ENCODE measurements at regions of chr6 and their contacts with region 1.

Region 1: DNA sequence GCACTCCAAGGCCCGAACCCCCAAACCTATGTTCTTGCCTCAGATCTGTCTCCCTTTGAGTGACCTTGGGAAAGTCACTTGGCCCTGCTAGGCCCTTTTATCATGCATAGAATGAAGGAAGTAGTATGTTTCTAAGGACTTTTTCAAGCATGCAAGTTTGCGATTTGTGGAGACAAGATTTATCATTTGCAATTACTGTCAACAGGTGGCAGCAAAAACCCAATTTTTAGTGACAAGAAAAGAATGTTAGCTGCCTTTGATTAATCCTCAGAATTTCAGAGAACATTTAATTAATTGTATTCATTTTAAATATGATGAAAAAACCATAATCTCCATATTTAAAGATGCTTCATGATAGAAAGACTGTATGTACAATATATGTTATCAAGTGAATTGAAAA is 28.3 kb upstream of the PREP start:
- DNase-seq: no peak
- H3K4me3 Mint-ChIP-seq: no peak overlapping the region
- H3K27ac Mint-ChIP-seq: no peak overlapping the region
- H3K4me1 Mint-ChIP-seq: peaks cover 3% of the 10 kb centered on the region
- H3K27me3 Mint-ChIP-seq: peaks cover 4% of the 10 kb centered on the region

Region 2: DNA sequence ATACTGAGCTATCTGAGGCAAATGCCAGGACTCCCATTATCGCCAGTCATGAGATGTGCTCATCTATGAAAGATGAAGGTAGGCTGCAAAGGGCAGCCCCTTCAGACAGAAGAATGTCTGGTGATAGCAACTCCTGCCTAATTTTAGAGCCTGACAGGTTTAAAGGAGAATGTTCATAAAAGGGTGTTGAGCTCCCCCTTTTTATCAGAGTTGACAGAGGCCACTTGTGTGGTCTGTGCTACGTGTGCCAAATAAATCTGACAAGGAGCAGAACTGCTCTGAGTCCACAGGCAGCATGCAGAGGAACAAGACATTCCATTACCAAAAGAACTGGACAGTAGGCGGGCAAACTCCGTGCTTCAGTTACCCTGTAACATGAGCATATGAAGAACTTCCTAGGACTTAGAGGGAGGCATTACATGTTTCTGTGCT is 130.1 kb before region 1 on chr6:
- CTCF ChIA-PET with region 1: no interaction called
- POLR2A ChIA-PET with region 1: no interaction called
- DNase-seq: no peak
- H3K4me3 Mint-ChIP-seq: no peak overlapping the region
- H3K27ac Mint-ChIP-seq: no peak overlapping the region
- H3K4me1 Mint-ChIP-seq: no peaks in the 10 kb centered on the region
- H3K27me3 Mint-ChIP-seq: no peaks in the 10 kb centered on the region

Region 3: DNA sequence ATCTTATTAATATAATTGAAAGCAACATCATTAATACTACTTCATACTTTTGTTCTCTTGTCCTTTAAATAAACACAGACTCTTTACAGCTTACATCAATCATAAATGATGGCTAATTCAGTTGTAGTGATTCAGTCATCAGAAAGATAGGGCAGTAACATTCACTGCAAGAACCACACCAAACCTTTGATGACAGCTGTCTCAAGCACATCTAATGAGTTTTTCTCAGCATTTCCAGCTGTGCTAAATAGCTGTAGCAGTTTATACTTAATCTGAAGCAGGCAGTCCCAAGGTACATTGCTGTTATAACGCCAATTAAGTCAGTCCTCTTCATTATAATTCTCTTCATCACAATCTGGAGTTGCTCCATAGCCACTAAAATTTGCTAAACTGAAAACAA is 74.1 kb before region 1 on chr6:
- CTCF ChIA-PET with region 1: no interaction called
- POLR2A ChIA-PET with region 1: no interaction called
- DNase-seq: no peak
- H3K4me3 Mint-ChIP-seq: no peak overlapping the region
- H3K27ac Mint-ChIP-seq: no peak overlapping the region
- H3K4me1 Mint-ChIP-seq: peaks cover 12% of the 10 kb centered on the region
- H3K27me3 Mint-ChIP-seq: no peaks in the 10 kb centered on the region

Region 4: DNA sequence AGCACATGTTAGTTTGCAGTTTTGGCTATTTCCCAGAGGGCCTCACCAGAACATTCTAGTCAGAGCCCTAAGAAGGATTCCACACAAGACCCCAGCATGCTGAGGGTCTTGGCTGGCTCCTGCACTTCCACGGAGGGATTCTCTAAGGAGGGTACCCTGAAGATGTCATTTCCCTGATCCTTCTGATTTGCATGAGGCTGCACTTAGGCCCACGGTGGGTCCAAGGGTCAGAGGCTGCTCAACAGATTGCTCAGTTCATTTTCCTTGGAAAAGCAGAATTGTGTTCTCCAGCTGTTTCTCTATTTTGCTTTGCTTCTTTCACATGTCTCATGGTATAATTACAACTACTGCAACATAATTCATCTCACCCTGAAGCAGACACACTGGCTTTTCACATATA is 50.6 kb before region 1 on chr6:
- CTCF ChIA-PET with region 1: no interaction called
- POLR2A ChIA-PET with region 1: no interaction called
- DNase-seq: no peak
- H3K4me3 Mint-ChIP-seq: no peak overlapping the region
- H3K27ac Mint-ChIP-seq: no peak overlapping the region
- H3K4me1 Mint-ChIP-seq: peaks cover 30% of the 10 kb centered on the region
- H3K27me3 Mint-ChIP-seq: no peaks in the 10 kb centered on the region

Region 5: GRCh38 chr6:105452924-105453756 is 21.9 kb after region 1 on chr6:
- CTCF ChIA-PET with region 1: interaction called, 10 read pairs
- POLR2A ChIA-PET with region 1: interaction called, 4 read pairs
- DNase-seq: peak; percentile 43
- H3K4me3 Mint-ChIP-seq: peak overlapping the region; percentile 66
- H3K27ac Mint-ChIP-seq: peak overlapping the region; percentile 63
- H3K4me1 Mint-ChIP-seq: peaks cover 45% of the 10 kb centered on the region
- H3K27me3 Mint-ChIP-seq: no peaks in the 10 kb centered on the region

Region 6: DNA sequence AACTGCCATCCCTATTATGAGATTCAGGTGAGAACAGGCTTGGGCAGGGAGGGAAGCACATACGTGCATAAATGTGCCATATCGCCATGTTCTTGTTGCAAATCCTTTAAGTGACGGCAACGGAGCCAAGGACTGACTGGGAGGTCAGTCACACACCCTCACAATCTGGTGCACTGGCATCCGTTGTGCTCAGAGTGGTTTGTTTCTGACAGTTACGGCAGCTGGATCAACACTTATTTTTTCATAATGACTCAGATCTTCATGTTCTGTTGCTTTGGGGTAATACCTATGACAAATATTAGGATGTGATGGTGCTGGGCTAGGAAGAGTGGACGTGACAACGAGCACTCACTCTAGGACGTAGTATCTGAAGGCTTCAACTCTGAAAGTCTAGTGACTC is 27.8 kb after region 1 on chr6:
- CTCF ChIA-PET with region 1: interaction called, 10 read pairs
- POLR2A ChIA-PET with region 1: interaction called, 4 read pairs
- DNase-seq: peak; percentile 72
- H3K4me3 Mint-ChIP-seq: peak overlapping the region; percentile 68
- H3K27ac Mint-ChIP-seq: peak overlapping the region; percentile 92
- H3K4me1 Mint-ChIP-seq: peaks cover 60% of the 10 kb centered on the region
- H3K27me3 Mint-ChIP-seq: no peaks in the 10 kb centered on the region

Region 7: GRCh38 chr6:105484238-105485161 is 53.3 kb after region 1 on chr6:
- CTCF ChIA-PET with region 1: interaction called, 32 read pairs
- POLR2A ChIA-PET with region 1: no interaction called
- DNase-seq: peak; percentile 23
- H3K4me3 Mint-ChIP-seq: peak overlapping the region; percentile 9
- H3K27ac Mint-ChIP-seq: peak overlapping the region; percentile 66
- H3K4me1 Mint-ChIP-seq: peaks cover 76% of the 10 kb centered on the region
- H3K27me3 Mint-ChIP-seq: no peaks in the 10 kb centered on the region

Region 8: DNA sequence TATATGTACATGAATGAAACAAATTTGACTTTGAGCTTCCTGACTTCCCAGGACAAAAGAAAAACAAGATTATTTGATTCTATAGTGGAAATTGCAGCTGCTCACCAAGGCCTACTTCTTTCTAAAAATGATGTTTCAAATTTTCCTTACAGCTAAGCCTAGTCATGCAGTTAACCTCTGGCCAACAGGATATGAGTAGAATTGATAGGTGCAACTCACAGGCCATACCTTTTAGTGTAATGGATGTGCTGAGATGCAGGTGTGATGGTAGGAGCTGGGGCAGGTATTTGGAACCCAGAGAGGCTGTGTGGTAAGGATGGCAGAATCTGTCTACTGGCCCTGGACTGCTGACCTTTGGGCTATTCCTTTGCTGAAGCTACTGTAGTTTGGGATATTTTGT is 202.6 kb after region 1 on chr6:
- CTCF ChIA-PET with region 1: no interaction called
- POLR2A ChIA-PET with region 1: no interaction called
- DNase-seq: no peak
- H3K4me3 Mint-ChIP-seq: no peak overlapping the region
- H3K27ac Mint-ChIP-seq: no peak overlapping the region
- H3K4me1 Mint-ChIP-seq: peaks cover 8% of the 10 kb centered on the region
- H3K27me3 Mint-ChIP-seq: peaks cover 4% of the 10 kb centered on the region

Measured in activated CD4-positive, alpha-beta memory T cell treated with anti-CD3 and anti-CD28 coated beads, Interleukin-2, amount 10 ng/mL, durations not matched to agents 7 days and 5 days (primary cell).